Heart right ventricle (tissue), 16 donors: ENCODE measurements at regions of chr12 and their contacts with region 1.

Region 1: GRCh38 chr12:87870061-87870460 is 159.1 kb downstream of the C12orf50 start:
- DNase-seq: no peak
- ATAC-seq: no peak
- H3K4me3 ChIP-seq: no peak overlapping the region
- H3K27ac ChIP-seq: no peak overlapping the region
- H3K4me1 ChIP-seq: no peaks in the 10 kb centered on the region
- H3K27me3 ChIP-seq: no peaks in the 10 kb centered on the region
- CTCF ChIP-seq: no peak

Region 2: DNA sequence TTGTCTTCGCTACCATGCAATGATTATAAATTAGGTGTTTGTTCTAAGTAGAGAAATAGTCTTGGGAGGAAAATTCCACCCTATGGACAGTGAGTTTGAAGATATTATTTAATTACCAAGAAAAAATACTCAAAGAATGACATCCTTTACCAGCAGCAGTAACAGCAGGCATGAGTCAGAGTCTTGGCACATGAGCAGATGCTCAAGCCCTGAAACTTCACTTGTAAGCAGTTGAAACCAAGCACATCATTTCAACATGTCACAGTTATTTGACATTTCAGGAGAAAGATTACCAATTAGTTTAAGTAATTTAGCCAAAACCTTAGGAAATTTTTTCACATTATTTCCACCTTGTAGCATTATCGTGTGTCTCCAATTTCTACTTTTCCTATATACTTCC is 60.0 kb after region 1 on chr12:
- intact Hi-C with region 1: loop called in 1 of 10 experiments (anchors 10 kb)
- DNase-seq: no peak
- ATAC-seq: no peak
- H3K4me3 ChIP-seq: no peak overlapping the region
- H3K27ac ChIP-seq: no peak overlapping the region
- H3K4me1 ChIP-seq: no peaks in the 10 kb centered on the region
- H3K27me3 ChIP-seq: no peaks in the 10 kb centered on the region
- CTCF ChIP-seq: no peak